ENCODE measurements at regions of chr12 and their contacts with region 1.

Region 1: GRCh38 chr12:5200278-5201087 is 156.8 kb downstream of the KCNA5 start:
- DNase-seq: no peak
- H3K4me3 ChIP-seq: no peak overlapping the region
- H3K27ac ChIP-seq: no peak overlapping the region
- H3K4me1 ChIP-seq: peaks cover 8% of the 10 kb centered on the region
- H3K27me3 ChIP-seq: peaks cover 7% of the 10 kb centered on the region
- CTCF ChIP-seq: peak; percentile 73 to 87

Region 2: GRCh38 chr12:5022465-5023061 is 177.9 kb before region 1 on chr12:
- CTCF ChIA-PET with region 1: no interaction called
- dilution Hi-C with region 1: no loop called
- in situ Hi-C with region 1: no loop called
- intact Hi-C with region 1: no loop called
- DNase-seq: peak; percentile 43
- H3K4me3 ChIP-seq: no peak overlapping the region
- H3K27ac ChIP-seq: no peak overlapping the region
- H3K4me1 ChIP-seq: peaks cover 6% of the 10 kb centered on the region
- H3K27me3 ChIP-seq: peaks cover 3% of the 10 kb centered on the region
- CTCF ChIP-seq: peak; percentile 81 to 94

Region 3: DNA sequence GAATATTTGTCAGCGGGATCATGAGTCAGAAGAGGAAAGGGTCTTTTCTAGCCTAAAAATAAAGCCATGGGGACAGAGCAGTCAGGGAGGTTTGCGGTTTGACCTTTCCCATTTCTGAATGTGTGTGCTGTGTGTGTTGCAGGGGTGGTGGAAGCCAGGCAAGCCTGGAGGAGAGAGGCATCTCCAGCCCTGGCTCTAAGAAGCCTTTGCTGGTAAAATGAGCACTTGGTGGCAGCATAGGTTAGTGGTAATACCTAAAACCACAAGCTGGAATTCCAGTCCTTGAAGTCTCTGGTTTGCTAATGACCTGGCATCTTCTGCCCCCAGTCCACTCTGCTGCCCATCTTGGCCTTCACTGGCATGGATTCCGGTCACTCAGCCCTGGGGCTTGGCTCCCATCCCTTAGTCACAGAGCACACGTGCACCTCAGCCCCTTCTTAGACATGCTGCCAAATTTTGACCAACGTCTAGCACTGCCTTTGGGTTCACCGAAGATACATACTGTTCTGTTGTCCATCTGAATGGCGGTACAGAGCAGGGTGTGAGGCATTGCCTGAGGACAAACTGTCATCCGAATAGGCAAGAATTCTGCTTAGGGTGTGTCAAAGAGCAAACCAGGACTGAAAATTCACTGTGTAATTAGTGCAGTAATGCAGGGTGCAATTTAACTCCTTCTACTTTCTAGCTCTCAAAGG is 104.1 kb before region 1 on chr12:
- CTCF ChIA-PET with region 1: no interaction called
- dilution Hi-C with region 1: no loop called
- in situ Hi-C with region 1: no loop called
- intact Hi-C with region 1: loop called (anchors 1 kb)
- DNase-seq: peak; percentile 38
- H3K4me3 ChIP-seq: no peak overlapping the region
- H3K27ac ChIP-seq: no peak overlapping the region
- H3K4me1 ChIP-seq: peaks cover 3% of the 10 kb centered on the region
- H3K27me3 ChIP-seq: peaks cover 5% of the 10 kb centered on the region
- CTCF ChIP-seq: peak; percentile 9 to 44

Region 4: GRCh38 chr12:5428332-5429221 is 228.1 kb after region 1 on chr12:
- CTCF ChIA-PET with region 1: no interaction called
- dilution Hi-C with region 1: no loop called
- in situ Hi-C with region 1: loop called in 1 of 2 experiments (anchors 10 kb)
- intact Hi-C with region 1: no loop called
- DNase-seq: no peak
- H3K4me3 ChIP-seq: no peak overlapping the region
- H3K27ac ChIP-seq: no peak overlapping the region
- H3K4me1 ChIP-seq: peaks cover 7% of the 10 kb centered on the region
- H3K27me3 ChIP-seq: peaks cover 33% of the 10 kb centered on the region
- CTCF ChIP-seq: peak; percentile 5 to 39

Measured in mammary epithelial cell (primary cell).